Panc1 (cell line): ENCODE measurements at regions of chr13 and their contacts with region 1.

Region 1: GRCh38 chr13:60627071-60627686 is 230.2 kb downstream of the TDRD3 start:
- DNase-seq: no peak
- ATAC-seq: 0 out of 2 replicates have a peak, but pooled peaks have one; percentile 63
- H3K4me3 ChIP-seq: no peak overlapping the region
- H3K27ac ChIP-seq: no peak overlapping the region
- H3K4me1 ChIP-seq: no peaks in the 10 kb centered on the region
- H3K27me3 ChIP-seq: no peaks in the 10 kb centered on the region
- CTCF ChIP-seq: peak; percentile 71

Region 2: DNA sequence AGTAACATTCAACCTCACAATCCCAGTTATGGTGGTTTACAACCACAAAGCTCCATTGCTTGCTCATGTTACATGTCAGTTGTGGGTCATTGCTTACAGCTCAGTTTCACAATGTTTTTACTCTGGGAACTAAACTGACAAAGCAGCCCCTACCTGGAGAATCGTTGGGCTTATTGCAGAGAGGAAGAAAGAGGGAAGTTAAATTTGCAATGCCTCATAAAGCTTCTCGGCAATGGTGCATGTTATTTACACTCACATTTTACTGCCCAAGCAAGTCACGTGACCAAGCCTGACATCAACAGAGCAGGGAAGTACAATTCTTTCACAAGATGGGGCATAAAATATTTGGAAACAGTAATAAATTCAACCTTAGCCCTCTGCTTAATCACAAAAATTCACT is 211.4 kb after region 1 on chr13:
- CTCF ChIA-PET with region 1: no interaction called
- POLR2A ChIA-PET with region 1: no interaction called
- in situ Hi-C with region 1: no loop called
- intact Hi-C with region 1: no loop called
- DNase-seq: no peak
- ATAC-seq: no peak
- H3K4me3 ChIP-seq: no peak overlapping the region
- H3K27ac ChIP-seq: no peak overlapping the region
- H3K4me1 ChIP-seq: no peaks in the 10 kb centered on the region
- H3K27me3 ChIP-seq: no peaks in the 10 kb centered on the region
- CTCF ChIP-seq: no peak

Region 3: DNA sequence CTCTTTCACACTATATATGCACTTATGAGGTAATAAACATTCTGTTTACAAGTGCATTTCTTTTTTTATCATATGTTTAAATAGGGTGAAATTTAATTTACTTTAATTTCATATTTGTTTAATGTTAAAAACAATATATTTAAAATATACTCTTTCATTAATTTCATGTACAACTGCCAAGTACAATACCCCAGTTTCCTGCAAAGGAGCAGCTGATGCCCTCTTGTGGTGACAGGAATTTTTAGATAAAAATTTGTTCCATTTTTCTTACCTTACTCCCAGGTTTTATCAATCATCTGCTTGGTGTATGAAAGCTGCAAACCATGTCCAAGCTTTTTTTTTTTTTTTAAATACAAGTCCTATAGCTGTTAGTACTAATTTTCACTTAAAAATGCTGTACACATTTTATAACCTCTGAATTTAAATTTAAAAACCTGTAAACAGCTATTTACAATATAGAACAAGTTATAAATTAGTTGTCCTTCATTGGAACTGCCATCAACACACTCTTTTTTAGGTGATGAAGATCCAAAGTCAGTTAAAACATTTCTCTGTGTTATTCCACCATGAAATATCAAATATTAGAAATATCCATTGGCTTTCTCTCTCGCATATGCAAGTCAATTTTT is 783.6 kb after region 1 on chr13:
- CTCF ChIA-PET with region 1: no interaction called
- POLR2A ChIA-PET with region 1: no interaction called
- in situ Hi-C with region 1: no loop called
- intact Hi-C with region 1: loop called (anchors 10 kb)
- DNase-seq: peak; percentile 1
- ATAC-seq: no peak
- H3K4me3 ChIP-seq: no peak overlapping the region
- H3K27ac ChIP-seq: no peak overlapping the region; the same call in 1 of the 2 replicates
- H3K4me1 ChIP-seq: no peaks in the 10 kb centered on the region
- H3K27me3 ChIP-seq: no peaks in the 10 kb centered on the region
- CTCF ChIP-seq: peak; percentile 65; the same call in 1 of the 2 replicates